A549 (cell line): ENCODE measurements at regions of chr1 and their contacts with region 1.

Region 1: DNA sequence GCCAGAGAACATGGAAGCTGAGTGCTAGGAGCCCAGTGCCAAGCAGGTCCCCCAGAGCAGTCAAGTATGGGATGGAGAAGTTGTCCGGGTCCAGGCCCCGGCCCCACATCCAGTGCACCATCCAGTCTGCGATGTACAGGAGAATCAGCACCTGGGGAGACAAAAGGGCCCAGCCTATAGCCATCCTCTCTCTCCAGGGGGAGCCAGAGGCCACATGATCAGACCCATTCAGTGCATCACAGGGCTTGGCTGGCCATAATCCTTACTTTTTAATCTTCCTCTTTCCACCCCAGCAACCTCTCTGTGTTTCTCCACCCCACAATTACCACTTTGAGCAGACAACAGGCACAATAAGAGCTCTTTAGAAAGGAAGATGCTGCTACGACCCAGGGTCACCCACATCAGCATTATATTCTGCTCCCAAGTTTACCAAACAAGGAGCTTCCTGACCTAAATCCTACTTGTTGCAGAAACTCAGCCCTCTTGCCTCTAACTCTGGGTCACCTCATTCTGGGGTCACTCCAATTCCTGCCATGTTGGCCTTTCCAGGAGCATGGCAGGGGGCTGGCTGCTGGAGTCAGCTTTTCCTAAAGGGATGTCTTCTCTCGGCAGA is 16.4 kb upstream of the RAB29 start:
- DNase-seq: peak; percentile 49 to 83
- ATAC-seq: peak; percentile 96 to 99
- H3K4me3 ChIP-seq: no peak overlapping the region
- H3K27ac ChIP-seq: no peak overlapping the region
- H3K4me1 ChIP-seq: no peaks in the 10 kb centered on the region
- CTCF ChIP-seq: peak; percentile 90
- EP300 ChIP-seq: no peak
- POLR2A ChIP-seq: no peak
- RAD21 ChIP-seq: peak; percentile 95 to 98

Region 2: DNA sequence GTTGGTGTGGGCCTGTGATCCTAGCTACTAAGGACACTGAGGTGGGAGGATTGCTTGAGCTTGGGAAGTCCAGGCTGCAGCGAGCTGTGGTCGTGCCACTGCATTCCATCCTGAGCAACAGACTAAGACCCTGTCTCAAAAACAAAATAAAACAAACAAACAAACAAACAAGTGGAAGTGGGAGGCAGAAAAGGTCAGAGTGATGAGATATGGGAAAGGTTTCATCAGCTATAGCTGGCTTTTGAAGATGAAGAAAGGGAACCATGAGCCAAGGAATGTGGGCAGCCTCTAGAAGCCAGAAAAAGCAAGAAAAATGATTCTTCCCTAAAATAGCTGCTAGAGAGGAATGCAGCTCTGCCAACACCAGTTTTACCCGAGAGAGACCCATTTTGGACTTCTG is 31.1 kb before region 1 on chr1:
- CTCF ChIA-PET with region 1: interaction called, 10 read pairs
- POLR2A ChIA-PET with region 1: no interaction called
- DNase-seq: no peak
- ATAC-seq: no peak
- H3K4me3 ChIP-seq: no peak overlapping the region
- H3K27ac ChIP-seq: no peak overlapping the region
- H3K4me1 ChIP-seq: no peaks in the 10 kb centered on the region; the same call in 2 of the 3 replicates
- CTCF ChIP-seq: no peak
- EP300 ChIP-seq: no peak
- POLR2A ChIP-seq: no peak
- RAD21 ChIP-seq: no peak

Region 3: DNA sequence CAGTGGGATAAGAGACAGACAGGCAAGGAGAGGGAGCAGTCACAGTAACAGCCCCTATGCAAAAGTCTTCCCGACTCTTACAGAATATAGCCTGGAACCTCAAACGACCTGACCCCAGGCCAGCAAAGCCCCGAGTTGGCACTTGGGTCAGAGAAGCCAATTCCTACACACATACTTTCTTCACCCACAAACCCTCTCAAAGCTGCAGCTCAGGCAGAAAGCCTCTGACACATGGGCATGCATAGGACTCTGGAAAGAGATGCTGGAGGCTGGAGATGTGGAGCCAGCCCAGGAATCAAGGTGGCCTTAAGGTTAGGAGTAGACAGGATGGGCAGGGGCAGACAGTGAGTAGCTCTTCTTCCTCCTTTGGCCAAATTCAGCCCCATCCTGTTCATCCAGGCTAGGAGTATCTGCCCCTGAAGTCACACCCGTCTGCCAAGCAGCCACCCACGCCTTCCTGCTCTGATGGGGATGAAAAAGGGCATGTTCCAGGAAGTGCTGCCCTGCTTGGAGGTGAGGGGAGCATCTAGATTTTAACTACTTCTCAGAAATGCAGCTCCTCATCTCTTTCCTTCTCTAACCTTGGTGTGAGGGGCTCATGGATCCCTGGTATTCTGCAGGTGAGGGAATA is 13.5 kb after region 1 on chr1:
- CTCF ChIA-PET with region 1: interaction called, 120 read pairs
- POLR2A ChIA-PET with region 1: no interaction called
- DNase-seq: no peak
- ATAC-seq: no peak; a peak in 1 of 6 replicates
- H3K4me3 ChIP-seq: no peak overlapping the region
- H3K27ac ChIP-seq: no peak overlapping the region
- H3K4me1 ChIP-seq: no peaks in the 10 kb centered on the region
- CTCF ChIP-seq: no peak
- EP300 ChIP-seq: no peak
- POLR2A ChIP-seq: no peak
- RAD21 ChIP-seq: no peak

Region 4: DNA sequence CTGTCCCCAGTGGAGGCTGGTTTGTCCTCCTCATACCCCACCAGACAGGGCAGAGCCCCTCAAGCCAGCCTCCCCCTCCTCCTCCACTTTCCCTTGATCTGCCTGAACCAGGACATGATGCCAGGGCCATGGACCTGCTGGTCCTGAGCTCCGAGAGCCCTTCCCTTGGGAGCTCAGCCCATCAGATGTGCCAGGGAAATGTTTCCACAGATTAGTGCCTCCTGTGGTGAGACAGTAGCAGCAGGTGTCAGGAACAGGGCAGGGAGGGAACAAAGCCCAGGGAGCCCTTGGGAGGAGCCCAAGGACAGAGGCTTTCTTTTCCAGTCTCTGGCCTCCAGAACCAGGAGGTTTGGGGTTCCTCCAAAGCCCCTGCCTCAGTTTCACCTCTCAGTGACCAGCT is 35.9 kb after region 1 on chr1:
- CTCF ChIA-PET with region 1: interaction called, 17 read pairs
- POLR2A ChIA-PET with region 1: no interaction called
- DNase-seq: peak in 1 of 2 experiments; percentile 13
- ATAC-seq: peak; percentile 86 to 93
- H3K4me3 ChIP-seq: no peak overlapping the region
- H3K27ac ChIP-seq: no peak overlapping the region
- H3K4me1 ChIP-seq: no peaks in the 10 kb centered on the region
- CTCF ChIP-seq: no peak
- EP300 ChIP-seq: no peak
- POLR2A ChIP-seq: no peak
- RAD21 ChIP-seq: no peak

Region 5: DNA sequence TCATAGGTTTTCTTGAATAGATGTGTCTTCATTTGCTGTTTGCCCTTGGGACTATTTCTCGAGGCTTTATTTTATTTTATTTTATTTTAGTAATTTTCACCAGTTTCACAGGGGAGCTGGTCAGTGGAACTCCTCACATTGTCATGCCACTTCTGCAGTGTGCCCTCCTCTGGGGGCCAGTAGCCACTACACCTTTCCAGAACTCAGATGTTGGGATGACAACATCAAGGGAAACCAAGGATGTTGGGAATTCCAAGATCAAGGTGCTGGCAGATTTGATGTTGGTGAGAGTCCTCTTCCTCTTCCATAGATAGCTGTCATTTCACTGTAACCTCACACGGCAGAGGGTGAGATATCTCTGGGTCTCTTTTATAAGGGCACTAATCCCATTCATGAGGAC is 116.1 kb after region 1 on chr1:
- CTCF ChIA-PET with region 1: interaction called, 208 read pairs
- POLR2A ChIA-PET with region 1: no interaction called
- DNase-seq: peak in 1 of 2 experiments; percentile 52
- ATAC-seq: peak; percentile 90 to 92; a peak in 5 of 6 replicates
- H3K4me3 ChIP-seq: no peak overlapping the region
- H3K27ac ChIP-seq: peak overlapping the region; percentile 26 to 57; a peak in 2 of 6 replicates
- H3K4me1 ChIP-seq: peaks cover 7% of the 10 kb centered on the region; the same call in 2 of the 3 replicates
- CTCF ChIP-seq: peak; percentile 68
- EP300 ChIP-seq: no peak
- POLR2A ChIP-seq: no peak
- RAD21 ChIP-seq: peak; percentile 63 to 77

Region 6: GRCh38 chr1:205939690-205940330 is 148.1 kb after region 1 on chr1:
- CTCF ChIA-PET with region 1: interaction called, 10 read pairs
- POLR2A ChIA-PET with region 1: no interaction called
- DNase-seq: peak; percentile 58 to 82
- ATAC-seq: peak; percentile 46 to 69; a peak in 5 of 6 replicates
- H3K4me3 ChIP-seq: no peak overlapping the region
- H3K27ac ChIP-seq: peak overlapping the region; percentile 68 to 93
- H3K4me1 ChIP-seq: peaks cover 59% of the 10 kb centered on the region
- CTCF ChIP-seq: no peak
- EP300 ChIP-seq: no peak
- POLR2A ChIP-seq: no peak
- RAD21 ChIP-seq: no peak

Region 7: GRCh38 chr1:205994346-205994745 is 202.7 kb after region 1 on chr1:
- CTCF ChIA-PET with region 1: interaction called, 22 read pairs
- POLR2A ChIA-PET with region 1: no interaction called
- DNase-seq: no peak
- ATAC-seq: no peak
- H3K4me3 ChIP-seq: no peak overlapping the region
- H3K27ac ChIP-seq: no peak overlapping the region
- H3K4me1 ChIP-seq: no peaks in the 10 kb centered on the region
- CTCF ChIP-seq: no peak
- EP300 ChIP-seq: no peak
- POLR2A ChIP-seq: no peak
- RAD21 ChIP-seq: no peak